ENCODE measurements at regions of chr16 and their contacts with region 1.

Region 1: GRCh38 chr16:728131-728889 is 1.4 kb downstream of the HAGHL start:
- DNase-seq: peak in 8 of 9 experiments; percentile 42 to 93 (median 68)
- ATAC-seq: peak; percentile 69
- H3K4me3 ChIP-seq: peak overlapping the region; percentile 33 to 46
- H3K4me3 Mint-ChIP-seq: peak overlapping the region; percentile 65
- H3K27ac ChIP-seq: no peak overlapping the region
- H3K27ac Mint-ChIP-seq: no peak overlapping the region
- H3K4me1 ChIP-seq: peaks cover 14% of the 10 kb centered on the region
- H3K4me1 Mint-ChIP-seq: peaks cover 12% of the 10 kb centered on the region
- H3K27me3 ChIP-seq: no peaks in the 10 kb centered on the region
- H3K27me3 Mint-ChIP-seq: no peaks in the 10 kb centered on the region
- CTCF ChIP-seq: no peak

Region 2: GRCh38 chr16:610513-611334 is 117.6 kb before region 1 on chr16:
- CTCF ChIA-PET with region 1: no interaction called
- POLR2A ChIA-PET with region 1: no interaction called
- intact Hi-C with region 1: no loop called
- DNase-seq: peak in 8 of 9 experiments; percentile 32 to 73 (median 65)
- ATAC-seq: peak; percentile 84
- H3K4me3 ChIP-seq: no peak overlapping the region
- H3K4me3 Mint-ChIP-seq: no peak overlapping the region
- H3K27ac ChIP-seq: no peak overlapping the region
- H3K27ac Mint-ChIP-seq: no peak overlapping the region
- H3K4me1 ChIP-seq: no peaks in the 10 kb centered on the region
- H3K4me1 Mint-ChIP-seq: peaks cover 6% of the 10 kb centered on the region
- H3K27me3 ChIP-seq: no peaks in the 10 kb centered on the region
- H3K27me3 Mint-ChIP-seq: no peaks in the 10 kb centered on the region
- CTCF ChIP-seq: peak; percentile 68

Region 3: DNA sequence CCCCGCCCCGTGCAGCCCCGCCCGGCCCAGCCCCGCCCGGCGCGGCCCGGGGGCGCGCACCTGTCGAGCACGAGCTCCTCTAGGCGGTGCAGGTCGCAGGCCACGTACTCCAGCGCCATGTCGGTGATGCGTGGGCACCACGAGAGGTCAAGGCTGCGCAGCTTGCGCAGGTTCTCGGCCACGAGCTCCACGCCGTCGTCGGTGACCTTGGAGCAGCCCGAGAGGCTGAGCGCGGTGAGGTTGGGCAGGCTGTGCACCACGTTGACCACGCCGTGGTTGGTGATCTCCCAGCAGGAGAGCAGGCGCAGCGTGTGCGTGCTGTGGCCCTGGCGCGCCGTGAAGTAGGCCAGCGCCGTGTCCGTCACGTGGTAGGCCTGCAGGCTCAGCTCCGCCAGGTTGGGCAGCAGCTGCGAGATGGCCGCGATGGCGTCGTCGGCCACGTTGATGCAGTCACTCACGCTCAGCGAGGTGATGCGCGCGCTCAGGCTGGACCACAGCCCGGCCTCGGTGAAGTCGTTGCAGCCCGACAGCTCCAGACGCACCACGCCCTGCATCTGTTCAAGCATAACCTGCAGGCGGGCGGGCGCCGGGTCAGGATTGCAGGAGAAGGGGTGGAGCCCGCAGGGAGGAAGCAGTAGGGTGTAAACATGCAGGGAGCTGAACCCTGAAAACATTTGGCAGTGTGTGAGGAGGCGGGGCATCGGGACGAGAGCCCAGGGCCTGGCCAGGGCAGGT is 32.8 kb before region 1 on chr16:
- CTCF ChIA-PET with region 1: interaction called, 4 read pairs
- POLR2A ChIA-PET with region 1: interaction called, 11 read pairs
- intact Hi-C with region 1: no loop called
- DNase-seq: peak; percentile 41 to 85 (median 62)
- ATAC-seq: peak; percentile 76
- H3K4me3 ChIP-seq: peak overlapping the region; percentile 58 to 59
- H3K4me3 Mint-ChIP-seq: peak overlapping the region; percentile 77
- H3K27ac ChIP-seq: peak overlapping the region in 1 of 2 experiments; percentile 45
- H3K27ac Mint-ChIP-seq: peak overlapping the region; percentile 66
- H3K4me1 ChIP-seq: peaks cover 42% of the 10 kb centered on the region
- H3K4me1 Mint-ChIP-seq: peaks cover 28% of the 10 kb centered on the region
- H3K27me3 ChIP-seq: peaks cover 0 to 17% of the 10 kb centered on the region in 2 experiments
- H3K27me3 Mint-ChIP-seq: no peaks in the 10 kb centered on the region
- CTCF ChIP-seq: no peak

Measured in CD8-positive, alpha-beta T cell (primary cell).